ENCODE measurements at regions of chr17 and their contacts with region 1.

Region 1: GRCh38 chr17:41329281-41329948 is 13.9 kb upstream of the KRTAP17-1 start:
- DNase-seq: peak; percentile 73
- ATAC-seq: peak; percentile 66
- H3K4me3 ChIP-seq: no peak overlapping the region
- H3K27ac ChIP-seq: no peak overlapping the region
- H3K4me1 ChIP-seq: no peaks in the 10 kb centered on the region
- H3K27me3 ChIP-seq: no peaks in the 10 kb centered on the region
- CTCF ChIP-seq: peak; percentile 60

Region 2: DNA sequence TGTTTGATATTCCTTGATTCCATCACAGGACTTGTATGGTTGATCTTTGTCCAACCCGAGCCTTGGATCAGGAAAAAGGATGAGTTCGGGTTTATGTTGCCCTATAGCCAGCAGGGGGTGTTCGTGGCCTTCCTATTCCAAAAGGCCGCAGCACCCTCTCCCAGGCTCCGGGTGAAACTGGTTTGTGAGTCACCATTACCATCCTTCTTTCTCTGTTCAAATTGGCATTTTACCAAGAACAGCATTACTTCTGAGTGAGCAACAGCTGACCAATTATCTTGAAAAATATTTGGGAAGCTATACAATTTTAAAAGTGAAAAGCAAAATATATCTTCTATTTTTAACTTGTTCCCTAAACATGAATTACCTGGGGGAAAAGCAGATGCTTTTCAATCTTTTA is 420.1 kb before region 1 on chr17:
- intact Hi-C with region 1: loop called (anchors 5 kb)
- DNase-seq: peak; percentile 83
- ATAC-seq: peak; percentile 99
- H3K4me3 ChIP-seq: no peak overlapping the region
- H3K27ac ChIP-seq: no peak overlapping the region
- H3K4me1 ChIP-seq: peaks cover 9% of the 10 kb centered on the region
- H3K27me3 ChIP-seq: peaks cover 9% of the 10 kb centered on the region
- CTCF ChIP-seq: peak; percentile 77